OCI-LY7 (cell line): ENCODE measurements at regions of chr12 and their contacts with region 1.

Region 1: DNA sequence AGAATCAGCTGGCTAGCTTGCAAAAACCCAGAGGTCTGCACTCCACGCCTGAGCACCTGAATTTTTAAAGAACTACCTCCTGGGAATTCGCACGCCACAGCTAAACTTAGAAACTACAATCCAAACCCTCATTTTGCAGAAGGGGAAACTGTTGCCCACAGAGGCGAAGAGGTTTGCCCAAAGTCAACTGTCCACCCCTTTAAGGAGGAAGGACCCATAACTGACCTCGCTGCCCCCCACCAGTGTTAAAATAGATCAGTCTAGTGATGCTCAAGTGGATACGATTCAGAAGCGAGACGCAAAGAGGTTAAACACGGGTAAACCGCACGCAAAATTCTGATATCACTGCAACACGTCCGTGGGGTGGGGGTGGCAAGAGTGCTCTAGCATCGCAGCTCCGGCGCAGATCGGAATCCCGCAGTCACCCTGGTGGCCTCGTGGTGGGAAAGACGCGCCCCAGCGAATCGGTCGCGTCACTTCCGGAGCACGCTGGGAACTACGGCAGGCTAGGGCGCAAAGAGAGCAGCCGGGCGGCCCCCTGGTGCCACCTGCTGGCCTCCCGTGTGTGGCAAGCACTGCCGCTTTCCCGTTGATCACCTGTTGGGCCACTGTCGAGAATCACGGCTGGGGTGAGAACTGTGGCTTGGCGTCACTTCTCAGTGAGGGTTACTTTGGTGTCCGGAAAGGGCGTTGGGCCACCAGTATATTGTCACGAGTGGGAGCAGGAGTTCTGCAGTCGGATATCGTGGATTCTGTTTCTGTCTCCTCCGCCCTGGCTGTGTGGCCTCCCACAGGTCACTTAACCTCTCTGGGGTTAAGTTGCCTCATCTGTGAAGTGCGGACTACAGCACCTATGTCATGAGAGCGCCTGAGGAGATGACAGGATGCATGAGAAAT is at the start of gene ALKBH2:
- DNase-seq: peak; percentile 96
- H3K4me3 ChIP-seq: peak within 1 kb of the TSS; percentile 84
- H3K27ac ChIP-seq: peak within 1 kb of the TSS; percentile 63
- H3K4me1 ChIP-seq: peaks cover 62% of the 10 kb centered on the region
- CTCF ChIP-seq: peak; percentile 89
- total RNA-seq, gene ALKBH2: 70.3 and 76.8 TPM in 2 replicates

Region 2: GRCh38 chr12:108884116-108885012 is 208.9 kb before region 1 on chr12:
- CTCF ChIA-PET with region 1: interaction called, 3 read pairs
- POLR2A ChIA-PET with region 1: interaction called, 6 read pairs
- intact Hi-C with region 1: loop called (anchors 1 kb)
- DNase-seq: peak; percentile 72
- H3K4me3 ChIP-seq: no peak overlapping the region
- H3K27ac ChIP-seq: no peak overlapping the region
- H3K4me1 ChIP-seq: no peaks in the 10 kb centered on the region
- CTCF ChIP-seq: peak; percentile 91

Region 3: GRCh38 chr12:108967869-108968540 is 125.3 kb before region 1 on chr12:
- CTCF ChIA-PET with region 1: no interaction called
- POLR2A ChIA-PET with region 1: no interaction called
- intact Hi-C with region 1: loop called (anchors 5 kb)
- DNase-seq: peak; percentile 57
- H3K4me3 ChIP-seq: no peak overlapping the region
- H3K27ac ChIP-seq: no peak overlapping the region
- H3K4me1 ChIP-seq: peaks cover 12% of the 10 kb centered on the region
- CTCF ChIP-seq: peak; percentile 91

Region 4: GRCh38 chr12:109065154-109065852 is 28.0 kb before region 1 on chr12:
- CTCF ChIA-PET with region 1: interaction called, 3 read pairs
- POLR2A ChIA-PET with region 1: interaction called, 20 read pairs
- intact Hi-C with region 1: loop called (anchors 1 kb)
- DNase-seq: no peak
- H3K4me3 ChIP-seq: no peak overlapping the region
- H3K27ac ChIP-seq: peak overlapping the region; percentile 94
- H3K4me1 ChIP-seq: peaks cover 63% of the 10 kb centered on the region
- CTCF ChIP-seq: no peak